Left cardiac atrium (tissue), 4 donors: ENCODE measurements at regions of chr6 and their contacts with region 1.

Region 1: DNA sequence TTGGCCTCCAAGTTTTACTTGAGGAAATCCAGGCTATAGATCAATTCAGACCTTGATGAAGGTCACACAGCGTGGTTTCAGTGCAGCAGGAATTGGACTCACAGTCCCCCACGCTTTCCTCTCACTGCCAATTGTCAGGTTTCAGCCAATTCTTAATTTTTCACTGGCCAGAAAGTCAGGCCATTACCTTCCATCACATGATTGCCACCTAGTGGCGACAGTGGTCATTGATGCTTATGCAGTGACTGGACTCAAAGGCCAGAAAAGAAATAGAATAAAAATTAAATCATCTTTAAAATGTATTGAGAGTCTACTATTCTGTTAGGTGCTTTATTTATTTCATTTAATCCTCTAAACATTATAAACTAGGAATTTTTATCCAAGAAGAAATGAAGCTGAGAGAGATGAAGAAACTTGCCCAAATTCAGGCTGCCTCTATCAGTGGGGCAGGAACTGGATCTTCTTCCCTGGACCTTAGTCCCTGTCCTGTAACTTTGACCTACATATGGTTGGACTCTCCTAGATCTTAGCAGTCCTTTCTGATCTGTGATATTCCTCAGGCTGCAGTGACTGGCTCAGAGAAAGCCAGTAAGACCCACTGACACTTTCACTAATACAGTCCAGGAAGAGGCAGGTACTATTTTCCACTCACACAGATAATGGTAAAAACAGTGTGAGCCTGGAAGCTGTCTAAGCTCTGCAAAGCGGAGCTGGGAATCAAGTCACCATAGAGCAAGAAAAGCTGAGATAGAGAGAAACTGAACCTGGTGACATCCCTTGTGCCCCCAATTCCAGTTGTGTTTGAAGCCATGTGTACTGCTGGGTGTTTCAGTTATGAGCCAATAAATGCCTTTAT is 133.3 kb downstream of the ELOVL4 start:
- DNase-seq: peak; percentile 75
- ATAC-seq: peak; percentile 56 to 88

Region 2: GRCh38 chr6:79536954-79537747 is 276.9 kb before region 1 on chr6 and contains the start of gene LCA5:
- intact Hi-C with region 1: no loop called
- DNase-seq: peak; percentile 94
- ATAC-seq: peak; percentile 99
- total RNA-seq, gene LCA5: 2.2 to 3.0 TPM

Region 3: DNA sequence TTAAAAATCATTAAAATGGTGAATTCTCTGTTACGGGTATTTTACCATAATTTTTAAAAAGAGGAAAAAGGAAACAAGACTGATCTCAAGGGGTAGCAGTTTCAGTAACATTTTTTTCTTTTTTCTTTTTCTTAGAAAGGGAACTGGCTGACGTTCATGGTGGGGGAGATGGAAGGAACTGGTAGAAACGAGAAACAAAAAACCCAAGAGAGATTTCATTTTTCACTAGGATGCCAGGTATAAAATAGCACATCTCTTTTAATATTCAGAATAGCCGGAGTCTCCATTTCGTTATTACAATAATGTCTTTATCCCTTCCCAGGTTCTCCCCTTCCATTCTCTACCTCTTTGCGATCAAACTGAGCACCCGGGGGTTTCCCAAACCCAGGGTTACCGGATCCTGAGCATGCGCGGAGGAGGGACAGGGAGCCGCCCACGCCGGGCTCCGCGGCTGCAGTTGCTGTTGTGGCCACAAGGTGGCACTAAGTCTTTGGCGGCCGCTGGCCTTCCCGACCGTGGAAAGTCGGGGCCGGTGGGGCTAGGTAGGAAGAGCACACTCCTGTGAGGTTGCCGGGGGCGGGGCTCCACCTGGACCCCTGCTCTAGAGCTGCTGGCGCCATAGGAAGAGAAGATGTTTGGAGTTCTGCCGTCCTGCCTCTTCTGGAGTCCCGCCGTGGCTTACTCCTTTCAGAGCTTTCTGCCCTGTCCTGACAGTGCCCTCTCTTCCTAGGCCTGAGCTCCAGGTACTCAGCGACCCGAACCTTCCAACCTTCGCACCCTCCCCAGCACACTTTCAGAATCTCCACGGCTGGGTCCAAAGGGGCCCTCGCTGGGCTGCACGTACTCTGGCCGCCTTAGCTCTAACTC is 36.1 kb before region 1 on chr6:
- intact Hi-C with region 1: loop called in 1 of 2 experiments (anchors 1 kb)
- DNase-seq: peak; percentile 86
- ATAC-seq: peak; percentile 94 to 96

Region 4: DNA sequence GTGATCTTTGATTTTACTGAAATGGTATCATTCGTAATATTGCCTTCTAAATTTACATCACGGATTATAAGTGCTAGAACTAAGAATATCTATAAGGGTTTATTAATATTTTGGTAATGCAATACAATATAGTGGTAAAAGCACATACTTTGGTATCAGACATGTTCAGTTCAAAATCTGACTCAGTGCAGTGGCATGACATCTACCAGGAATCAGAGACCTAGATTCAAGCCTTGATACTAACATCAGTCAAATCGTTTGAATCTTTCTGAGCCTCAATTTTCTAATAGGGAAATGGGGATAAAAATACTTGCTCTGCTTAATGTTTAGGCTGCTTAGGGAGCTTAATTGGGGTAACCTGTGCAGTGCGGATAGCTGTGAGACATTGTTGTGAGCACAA is 780.4 kb after region 1 on chr6:
- intact Hi-C with region 1: no loop called
- DNase-seq: no peak
- ATAC-seq: no peak